Naive thymus-derived CD8-positive, alpha-beta T cell (primary cell): ENCODE measurements at regions of chr9 and their contacts with region 1.

Region 1: DNA sequence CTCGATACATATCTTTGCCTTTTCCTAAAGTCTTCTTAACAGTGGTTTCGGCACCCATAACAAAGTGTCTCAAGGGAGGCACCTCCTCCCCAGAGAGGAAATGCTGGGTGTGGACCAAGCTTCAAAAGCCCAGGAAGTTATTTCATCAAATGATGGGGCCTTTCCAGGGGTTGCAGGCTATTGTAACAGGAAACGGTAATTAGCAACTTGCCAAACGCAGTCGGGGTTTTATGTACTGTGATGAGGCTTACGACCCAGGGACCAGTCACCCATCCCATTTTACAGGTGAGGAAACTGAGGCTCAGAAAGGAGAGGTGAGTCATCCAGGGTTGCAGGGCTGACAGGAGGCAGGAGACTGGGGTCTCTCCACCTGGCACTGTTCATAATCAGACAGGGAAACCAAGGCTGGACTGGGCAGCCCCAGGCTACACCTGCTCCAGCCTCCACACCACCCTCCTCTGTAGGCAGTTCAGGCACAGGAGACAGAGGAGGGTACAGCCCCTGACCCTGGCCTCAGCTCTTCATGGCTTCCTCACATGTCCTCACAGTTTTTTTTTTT is 30.0 kb upstream of the SUSD3 start:
- DNase-seq: peak; percentile 32 to 91 (median 80)
- ATAC-seq: peak; percentile 85 to 92
- H3K4me3 Mint-ChIP-seq: peak overlapping the region; percentile 66 to 95 (median 83)
- H3K27ac Mint-ChIP-seq: peak overlapping the region; percentile 96 to 100 (median 99)
- H3K4me1 Mint-ChIP-seq: peaks cover 38 to 91% (median 87%) of the 10 kb centered on the region in 4 donors
- H3K27me3 Mint-ChIP-seq: no peaks in the 10 kb centered on the region

Region 2: GRCh38 chr9:92920437-92920836 is 108.1 kb before region 1 on chr9:
- POLR2A ChIA-PET with region 1: no interaction called
- DNase-seq: no peak
- ATAC-seq: no peak
- H3K4me3 Mint-ChIP-seq: no peak overlapping the region
- H3K27ac Mint-ChIP-seq: peak overlapping the region in 1 of 10 donors; percentile 28
- H3K4me1 Mint-ChIP-seq: peaks cover 7 to 27% (median 15%) of the 10 kb centered on the region in 4 donors
- H3K27me3 Mint-ChIP-seq: no peaks in the 10 kb centered on the region

Region 3: DNA sequence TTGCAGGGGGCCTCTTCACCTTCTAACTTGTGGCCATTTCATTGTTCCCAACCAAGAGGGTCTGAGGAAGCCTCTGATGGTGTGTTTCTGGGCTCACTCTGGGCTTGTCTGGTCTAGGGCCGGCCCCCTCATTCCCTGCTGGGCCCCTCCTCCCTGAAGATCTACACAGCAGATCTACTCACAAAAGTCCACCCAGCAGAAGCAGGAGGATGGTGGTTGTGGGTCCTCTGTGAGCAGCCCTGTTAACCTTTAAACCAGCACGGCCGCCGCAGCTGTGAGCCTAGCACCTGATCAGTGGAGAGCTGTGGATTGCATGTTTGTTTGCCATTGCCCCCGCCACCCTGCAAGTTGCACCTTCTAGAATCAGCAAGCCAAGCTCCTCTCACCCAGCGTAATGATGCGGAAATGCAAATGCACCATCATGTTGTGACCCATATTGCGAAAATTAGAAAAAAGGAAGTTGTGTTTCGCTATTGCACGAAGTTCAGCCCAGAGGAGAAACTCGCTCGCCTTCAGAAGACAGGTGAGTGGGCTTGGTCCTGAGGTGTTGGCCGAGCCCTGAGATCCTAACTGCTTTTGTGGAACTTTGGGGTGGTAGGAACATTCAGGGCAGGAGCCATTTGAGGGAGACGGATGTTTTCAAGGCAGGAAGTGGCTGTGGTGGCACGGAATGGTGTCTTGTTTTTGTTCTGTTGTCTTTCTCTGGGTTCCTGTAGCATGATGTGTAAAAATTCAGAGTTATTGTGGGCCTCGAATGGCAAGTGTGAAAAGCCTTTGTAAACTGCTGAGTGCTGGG is 64.5 kb before region 1 on chr9:
- POLR2A ChIA-PET with region 1: interaction called, 167 read pairs
- DNase-seq: peak; percentile 47 to 96 (median 80)
- ATAC-seq: peak; percentile 66 to 73
- H3K4me3 Mint-ChIP-seq: peak overlapping the region; percentile 86 to 97 (median 92)
- H3K27ac Mint-ChIP-seq: peak overlapping the region; percentile 91 to 100 (median 98)
- H3K4me1 Mint-ChIP-seq: peaks cover 28 to 84% (median 60%) of the 10 kb centered on the region in 4 donors
- H3K27me3 Mint-ChIP-seq: no peaks in the 10 kb centered on the region

Region 4: DNA sequence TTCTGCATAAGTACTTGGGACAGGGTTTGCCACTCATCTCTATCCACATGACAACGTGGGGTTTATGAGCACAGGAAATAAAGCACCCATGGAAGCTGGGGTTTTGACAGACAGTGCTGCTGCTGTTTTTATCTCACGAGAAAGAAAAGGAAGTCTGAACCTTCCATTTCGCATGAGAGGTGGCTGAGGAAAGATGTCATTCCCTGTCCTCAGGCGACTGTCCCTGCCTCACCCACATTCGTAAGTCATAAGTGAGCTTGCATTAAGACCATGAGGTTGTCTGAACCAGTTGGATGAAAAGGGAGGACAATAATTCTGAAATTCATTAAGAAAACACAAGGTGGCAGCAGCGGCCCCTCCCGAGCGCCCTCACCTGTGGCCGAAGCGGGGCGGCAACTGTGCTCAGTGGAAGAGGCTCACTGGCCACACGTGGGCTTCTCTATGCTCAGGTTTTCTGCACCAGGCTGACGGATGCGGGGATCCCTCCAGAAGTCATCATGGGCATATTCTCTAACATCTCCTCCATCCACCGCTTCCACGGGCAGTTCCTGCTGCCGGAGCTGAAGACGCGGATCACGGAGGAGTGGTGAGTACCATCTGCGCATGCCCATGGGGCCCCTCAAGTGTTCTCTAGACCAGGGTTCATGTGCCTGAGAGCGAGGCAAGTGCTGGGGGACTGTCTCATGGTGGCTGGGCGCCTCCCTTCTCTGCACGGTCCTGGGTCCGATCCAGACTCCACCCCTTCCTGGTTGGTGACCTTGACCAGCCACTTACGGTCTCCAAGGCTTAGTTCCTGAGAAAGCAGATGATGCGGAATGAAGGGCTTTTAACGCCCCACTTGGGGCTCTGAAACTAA is 24.7 kb before region 1 on chr9:
- POLR2A ChIA-PET with region 1: interaction called, 67 read pairs
- DNase-seq: peak; percentile 45 to 77 (median 66)
- ATAC-seq: peak; percentile 74 to 80
- H3K4me3 Mint-ChIP-seq: peak overlapping the region; percentile 9 to 79 (median 65)
- H3K27ac Mint-ChIP-seq: peak overlapping the region; percentile 80 to 97 (median 92)
- H3K4me1 Mint-ChIP-seq: peaks cover 24 to 67% (median 52%) of the 10 kb centered on the region in 4 donors
- H3K27me3 Mint-ChIP-seq: no peaks in the 10 kb centered on the region

Region 5: DNA sequence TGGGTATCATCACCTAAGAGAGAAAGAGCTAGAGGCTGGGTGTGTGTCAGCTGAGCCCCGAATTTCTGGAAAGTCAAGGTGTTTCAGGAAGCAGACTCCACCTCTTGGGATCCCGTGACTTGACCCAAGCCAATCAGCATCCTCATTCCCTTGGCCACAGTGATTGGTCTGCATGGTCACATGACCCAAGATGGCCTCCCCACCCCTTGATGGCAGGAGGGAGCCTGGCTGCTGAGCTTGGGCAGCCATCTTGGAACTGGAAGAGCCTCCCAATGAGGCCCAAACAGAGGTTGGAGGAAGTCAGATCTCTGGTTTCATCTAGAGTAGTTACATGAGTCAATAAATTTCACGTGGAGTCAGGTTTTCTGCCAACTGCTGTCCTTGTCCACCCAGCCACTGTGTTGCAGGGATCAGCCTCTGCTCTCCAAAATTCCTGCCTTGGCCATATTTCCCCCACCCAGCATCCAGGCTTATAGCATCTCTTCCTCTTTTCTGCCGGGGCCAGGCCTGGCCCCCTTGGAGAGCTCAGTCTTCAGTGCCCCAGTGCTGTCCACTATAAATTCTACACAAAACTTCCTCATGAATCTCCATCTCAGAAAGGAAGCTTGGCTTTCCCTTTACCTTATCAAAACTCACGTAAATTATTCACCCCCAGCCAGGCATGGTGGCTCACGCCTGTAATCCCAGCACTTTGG is 12.7 kb after region 1 on chr9:
- POLR2A ChIA-PET with region 1: interaction called, 608 read pairs
- DNase-seq: no peak
- ATAC-seq: peak in 1 of 2 donors; percentile 29
- H3K4me3 Mint-ChIP-seq: peak overlapping the region in 3 of 10 donors; percentile 22 to 51 (median 36)
- H3K27ac Mint-ChIP-seq: peak overlapping the region; percentile 87 to 94 (median 92)
- H3K4me1 Mint-ChIP-seq: peaks cover 36 to 82% (median 76%) of the 10 kb centered on the region in 4 donors
- H3K27me3 Mint-ChIP-seq: no peaks in the 10 kb centered on the region

Region 6: GRCh38 chr9:93082841-93083411 is 54.4 kb after region 1 on chr9:
- POLR2A ChIA-PET with region 1: interaction called, 10 read pairs
- DNase-seq: peak in 1 of 10 donors; percentile 61
- ATAC-seq: peak; percentile 47 to 53
- H3K4me3 Mint-ChIP-seq: peak overlapping the region in 5 of 10 donors; percentile 10 to 81 (median 41)
- H3K27ac Mint-ChIP-seq: peak overlapping the region; percentile 46 to 96 (median 90)
- H3K4me1 Mint-ChIP-seq: peaks cover 9 to 43% (median 21%) of the 10 kb centered on the region in 4 donors
- H3K27me3 Mint-ChIP-seq: no peaks in the 10 kb centered on the region

Region 7: DNA sequence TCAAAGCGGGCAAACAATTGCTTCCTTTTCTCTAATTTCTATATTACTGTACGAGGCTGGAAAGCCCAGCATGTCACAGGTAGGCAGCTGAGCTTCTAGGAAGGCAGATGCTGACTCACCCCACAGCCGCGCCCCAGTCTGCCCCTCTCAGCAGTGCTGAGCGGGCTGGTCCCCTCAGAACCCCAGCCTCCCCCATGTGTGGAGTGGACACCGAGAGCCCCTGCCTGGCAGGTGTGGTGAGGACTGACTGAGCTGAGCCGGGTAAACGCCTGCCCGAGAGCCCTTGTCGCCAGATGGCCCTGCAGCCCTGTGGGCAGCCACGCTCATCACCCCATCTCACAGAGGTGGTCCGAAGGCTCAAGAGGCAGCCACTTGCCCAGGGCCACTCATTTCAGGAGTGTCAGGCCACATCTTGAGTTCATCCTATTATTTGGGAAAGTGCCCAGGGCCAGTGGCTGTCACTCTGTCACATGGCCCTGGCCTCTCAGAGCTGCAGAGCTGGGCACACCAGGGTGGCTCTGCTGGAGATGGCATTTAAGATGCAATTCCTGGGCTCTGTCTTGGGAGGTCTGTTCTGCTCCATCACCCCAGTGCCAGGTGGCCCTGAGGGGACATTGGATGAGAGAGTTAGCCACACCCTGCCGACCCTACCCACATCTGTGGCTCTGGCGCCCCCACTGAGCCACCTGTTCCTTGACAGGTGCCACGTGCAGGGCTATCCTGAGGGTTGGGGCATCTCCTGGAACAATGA is 79.9 kb after region 1 on chr9:
- POLR2A ChIA-PET with region 1: interaction called, 13 read pairs
- DNase-seq: no peak
- ATAC-seq: no peak
- H3K4me3 Mint-ChIP-seq: no peak overlapping the region
- H3K27ac Mint-ChIP-seq: peak overlapping the region in 5 of 10 donors; percentile 17 to 86 (median 81)
- H3K4me1 Mint-ChIP-seq: peaks cover 18 to 65% (median 51%) of the 10 kb centered on the region in 4 donors
- H3K27me3 Mint-ChIP-seq: no peaks in the 10 kb centered on the region